HepG2 (cell line): ENCODE measurements at regions of chr20 and their contacts with region 1.

Region 1: DNA sequence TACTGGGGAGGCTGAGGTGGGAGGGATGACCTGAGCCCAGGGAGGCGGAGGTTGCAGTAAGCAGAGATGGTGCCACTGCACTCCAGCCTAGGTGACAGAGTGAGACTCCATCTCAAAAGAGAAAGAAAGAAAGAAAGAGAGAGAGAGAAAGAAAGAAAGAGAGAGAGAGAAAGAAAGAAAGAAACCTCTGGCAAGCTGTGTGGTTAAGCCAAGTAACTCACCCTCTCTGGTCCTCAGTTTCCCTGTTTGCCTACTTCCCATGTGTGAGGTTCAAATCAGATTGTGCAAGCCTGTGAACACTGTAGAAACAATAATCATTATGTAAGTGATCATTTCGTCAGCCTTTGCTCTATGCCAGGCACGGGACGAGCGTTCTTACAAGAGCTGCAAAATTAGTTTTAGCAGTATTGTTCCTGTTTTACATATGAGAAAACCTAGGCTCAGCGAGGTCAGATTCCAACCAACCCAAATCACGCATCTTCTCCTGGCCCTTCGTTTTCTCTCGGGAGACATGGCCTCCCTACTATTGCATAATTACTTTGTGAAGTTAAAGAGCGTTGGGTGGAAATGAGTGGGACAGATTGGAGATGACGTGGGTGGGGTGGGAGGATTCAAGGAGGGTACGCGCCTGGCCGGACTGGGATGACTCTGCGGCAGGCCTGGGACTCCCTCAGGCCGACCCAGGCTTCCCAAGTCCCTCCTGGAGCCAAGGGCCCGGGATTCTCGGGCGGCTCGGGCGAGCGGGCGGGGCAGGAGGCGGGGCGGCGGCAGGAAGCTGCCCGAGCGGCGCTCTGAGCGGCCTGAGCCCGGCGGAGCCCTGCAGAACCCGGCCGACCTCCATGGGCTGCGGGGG is at the start of gene SNX21:
- DNase-seq: peak; percentile 84
- ATAC-seq: peak; percentile 92
- H3K4me3 ChIP-seq: peak within 1 kb of the TSS; percentile 71 to 87 (median 86)
- H3K27ac ChIP-seq: peak within 1 kb of the TSS; percentile 69
- H3K4me1 ChIP-seq: peaks cover 67% of the 10 kb centered on the region
- H3K27me3 ChIP-seq: no peaks in the 10 kb centered on the region
- CTCF ChIP-seq: no peak; the same call in 1 of the 2 replicates
- EP300 ChIP-seq: no peak; a peak in 1 of 4 replicates
- POLR2A ChIP-seq: peak; percentile 83 to 89; a peak in 3 of 4 replicates
- RAD21 ChIP-seq: no peak
- total RNA-seq, gene SNX21: 9.3 and 12.8 TPM in 2 replicates

Region 2: GRCh38 chr20:45850926-45851325 is 17.7 kb after region 1 on chr20:
- CTCF ChIA-PET with region 1: no interaction called
- POLR2A ChIA-PET with region 1: interaction called, 21 read pairs
- in situ Hi-C with region 1: no loop called
- intact Hi-C with region 1: no loop called
- DNase-seq: no peak
- ATAC-seq: no peak
- H3K4me3 ChIP-seq: no peak overlapping the region
- H3K27ac ChIP-seq: no peak overlapping the region
- H3K4me1 ChIP-seq: peaks cover 7% of the 10 kb centered on the region
- H3K27me3 ChIP-seq: no peaks in the 10 kb centered on the region
- CTCF ChIP-seq: no peak
- EP300 ChIP-seq: no peak
- POLR2A ChIP-seq: no peak
- RAD21 ChIP-seq: no peak

Region 3: GRCh38 chr20:45857114-45857881 is 24.0 kb after region 1 on chr20 and contains the starts of genes ACOT8 and ZSWIM3:
- CTCF ChIA-PET with region 1: no interaction called
- POLR2A ChIA-PET with region 1: interaction called, 21 read pairs
- in situ Hi-C with region 1: no loop called
- intact Hi-C with region 1: no loop called
- DNase-seq: peak; percentile 100
- ATAC-seq: peak; percentile 98
- H3K4me3 ChIP-seq: peak within 1 kb of the TSS; percentile 78 to 91 (median 83)
- H3K27ac ChIP-seq: peak within 1 kb of the TSS; percentile 49
- H3K4me1 ChIP-seq: peaks cover 55% of the 10 kb centered on the region
- H3K27me3 ChIP-seq: no peaks in the 10 kb centered on the region; a peak in 1 of 5 replicates
- CTCF ChIP-seq: 0 out of 2 replicates have a peak, but pooled peaks have one; percentile 19
- EP300 ChIP-seq: peak in 1 of 2 experiments; percentile 41; a peak in 1 of 4 replicates
- POLR2A ChIP-seq: peak; percentile 84 to 97
- RAD21 ChIP-seq: peak; percentile 62
- total RNA-seq, gene ACOT8: 31.4 and 39.1 TPM in 2 replicates
- total RNA-seq, gene ZSWIM3: 5.8 and 7.3 TPM in 2 replicates